ENCODE measurements at regions of chr7 and their contacts with region 1.

Region 1: DNA sequence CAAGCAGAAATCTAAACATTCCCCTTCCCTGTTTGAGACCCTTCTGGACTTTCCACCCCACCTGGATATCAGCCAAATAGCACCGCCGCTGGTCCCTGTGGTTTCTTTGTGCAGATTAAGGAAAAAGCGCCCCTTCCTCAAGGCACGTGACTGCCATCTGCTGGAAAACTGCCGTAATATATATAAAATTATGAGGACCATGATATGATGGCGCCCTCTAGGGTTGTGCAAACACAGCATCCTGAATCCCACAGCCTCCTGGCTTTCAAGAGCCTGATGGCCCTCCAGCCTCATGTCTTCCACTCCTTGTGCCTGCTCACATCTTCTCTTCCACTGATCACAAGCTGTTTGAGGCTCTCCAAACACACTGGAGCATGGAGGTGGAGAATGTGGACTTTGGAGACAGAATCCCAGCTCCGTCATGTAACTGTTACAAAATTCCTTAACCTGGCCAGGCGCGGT is 121.3 kb downstream of the MYL10 start:
- DNase-seq: peak in 1 of 2 experiments; percentile 81
- H3K4me3 ChIP-seq: no peak overlapping the region
- H3K27ac ChIP-seq: no peak overlapping the region
- H3K4me1 ChIP-seq: peaks cover 2 to 15% (median 7%) of the 10 kb centered on the region in 4 experiments
- H3K27me3 ChIP-seq: no peaks in the 10 kb centered on the region
- CTCF ChIP-seq: peak; percentile 72 to 100 (median 93)
- EP300 ChIP-seq: no peak
- POLR2A ChIP-seq: no peak
- RAD21 ChIP-seq: peak; percentile 94 to 96

Region 2: GRCh38 chr7:101410743-101411507 is 96.9 kb before region 1 on chr7:
- CTCF ChIA-PET with region 1: interaction called, 13 read pairs
- POLR2A ChIA-PET with region 1: interaction called, 3 read pairs
- DNase-seq: peak; percentile 83 to 95
- H3K4me3 ChIP-seq: no peak overlapping the region
- H3K27ac ChIP-seq: no peak overlapping the region
- H3K4me1 ChIP-seq: peaks cover 4 to 9% (median 6%) of the 10 kb centered on the region in 4 experiments
- H3K27me3 ChIP-seq: no peaks in the 10 kb centered on the region
- CTCF ChIP-seq: peak; percentile 88 to 99 (median 99)
- EP300 ChIP-seq: no peak
- POLR2A ChIP-seq: no peak
- RAD21 ChIP-seq: peak; percentile 78 to 89

Region 3: GRCh38 chr7:101470668-101471487 is 36.9 kb before region 1 on chr7:
- CTCF ChIA-PET with region 1: interaction called, 17 read pairs
- POLR2A ChIA-PET with region 1: no interaction called
- DNase-seq: no peak
- H3K4me3 ChIP-seq: no peak overlapping the region
- H3K27ac ChIP-seq: no peak overlapping the region
- H3K4me1 ChIP-seq: peaks cover 0 to 11% (median 4%) of the 10 kb centered on the region in 4 experiments; a peak in 4 of 7 replicates
- H3K27me3 ChIP-seq: no peaks in the 10 kb centered on the region
- CTCF ChIP-seq: no peak
- EP300 ChIP-seq: no peak
- POLR2A ChIP-seq: no peak
- RAD21 ChIP-seq: no peak

Region 4: DNA sequence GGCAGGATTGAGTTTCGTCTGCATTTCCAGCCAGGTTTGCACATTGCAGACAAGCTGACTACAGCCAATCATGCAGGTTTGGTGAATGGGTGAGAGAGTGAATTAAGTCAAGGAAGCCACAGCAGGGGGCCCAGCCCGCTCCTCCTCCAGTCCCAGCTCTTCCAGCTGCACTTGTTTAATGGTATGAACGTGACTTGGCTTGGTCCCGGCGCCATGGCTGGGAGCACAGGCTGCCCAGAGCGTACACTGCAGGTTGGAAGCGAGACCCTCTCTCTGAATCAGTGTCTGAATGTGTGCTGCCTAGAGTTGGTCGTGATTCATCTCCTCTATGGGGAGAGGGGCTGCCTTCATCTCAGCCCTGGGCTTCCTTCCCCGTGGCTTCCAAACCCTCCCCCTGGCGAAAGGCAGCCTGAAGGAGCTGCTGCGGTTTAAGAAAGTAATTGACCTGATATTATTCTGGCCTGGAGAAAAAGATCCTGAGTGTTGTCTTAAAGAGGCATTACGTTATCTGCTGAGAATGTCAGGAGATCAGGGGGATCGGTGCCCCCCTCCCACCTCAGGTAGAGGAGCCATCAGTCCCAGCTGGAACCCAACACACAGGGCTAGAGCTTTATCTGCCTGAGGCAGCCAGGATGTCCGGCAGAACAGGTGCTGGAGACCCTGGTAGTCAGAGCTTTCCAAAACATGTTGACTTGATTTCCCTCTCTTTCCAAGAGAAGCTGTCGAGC is 13.1 kb before region 1 on chr7:
- CTCF ChIA-PET with region 1: interaction called, 22 read pairs
- POLR2A ChIA-PET with region 1: interaction called, 4 read pairs
- DNase-seq: no peak
- H3K4me3 ChIP-seq: no peak overlapping the region; a peak in 1 of 8 replicates
- H3K27ac ChIP-seq: no peak overlapping the region
- H3K4me1 ChIP-seq: peaks cover 4 to 16% (median 8%) of the 10 kb centered on the region in 4 experiments
- H3K27me3 ChIP-seq: no peaks in the 10 kb centered on the region
- CTCF ChIP-seq: no peak
- EP300 ChIP-seq: no peak
- POLR2A ChIP-seq: no peak
- RAD21 ChIP-seq: no peak

Region 5: DNA sequence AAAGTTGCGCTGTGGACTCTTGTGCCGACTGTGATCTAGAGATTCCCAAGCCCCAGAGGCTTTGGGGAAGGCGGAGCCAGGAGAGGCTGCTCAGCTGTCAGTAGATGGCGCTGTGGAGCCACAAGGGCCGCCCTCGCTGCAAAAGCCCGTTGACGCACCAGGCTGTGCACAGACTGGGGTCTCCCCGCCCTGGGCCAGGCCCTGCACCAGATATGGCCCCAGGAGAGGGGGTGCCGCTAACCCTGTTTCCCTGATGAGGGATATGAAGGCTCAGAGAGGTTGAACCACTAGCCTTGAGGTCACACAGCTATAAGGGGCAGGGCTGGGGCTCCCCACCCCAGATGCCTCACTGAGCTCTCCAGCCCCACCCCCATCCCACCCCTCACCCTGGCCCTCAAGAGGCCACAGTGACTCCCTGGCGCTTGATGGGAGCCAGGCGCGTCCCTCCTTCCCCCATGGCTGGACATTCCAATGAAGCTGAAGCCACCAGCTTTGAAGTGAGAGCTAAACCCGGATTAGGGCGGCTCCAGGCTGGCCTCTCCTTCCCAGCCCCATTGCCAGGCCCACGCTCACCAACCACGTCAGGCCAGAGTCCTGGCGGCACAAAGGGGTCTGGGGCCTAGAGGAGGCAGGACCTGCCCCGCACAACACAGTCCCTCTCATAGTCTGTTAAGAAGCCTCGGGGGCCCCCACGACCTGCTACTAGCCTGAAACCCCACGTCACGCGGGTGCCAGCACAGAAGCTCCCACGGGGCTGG is 94.8 kb after region 1 on chr7:
- CTCF ChIA-PET with region 1: no interaction called
- POLR2A ChIA-PET with region 1: no interaction called
- DNase-seq: peak; percentile 77 to 97
- H3K4me3 ChIP-seq: no peak overlapping the region
- H3K27ac ChIP-seq: no peak overlapping the region
- H3K4me1 ChIP-seq: peaks cover 0 to 6% (median 6%) of the 10 kb centered on the region in 4 experiments; a peak in 5 of 7 replicates
- H3K27me3 ChIP-seq: no peaks in the 10 kb centered on the region
- CTCF ChIP-seq: peak; percentile 89 to 97 (median 91)
- EP300 ChIP-seq: peak in 1 of 2 experiments; percentile 23; a peak in 1 of 3 replicates
- POLR2A ChIP-seq: no peak
- RAD21 ChIP-seq: peak; percentile 97

Region 6: DNA sequence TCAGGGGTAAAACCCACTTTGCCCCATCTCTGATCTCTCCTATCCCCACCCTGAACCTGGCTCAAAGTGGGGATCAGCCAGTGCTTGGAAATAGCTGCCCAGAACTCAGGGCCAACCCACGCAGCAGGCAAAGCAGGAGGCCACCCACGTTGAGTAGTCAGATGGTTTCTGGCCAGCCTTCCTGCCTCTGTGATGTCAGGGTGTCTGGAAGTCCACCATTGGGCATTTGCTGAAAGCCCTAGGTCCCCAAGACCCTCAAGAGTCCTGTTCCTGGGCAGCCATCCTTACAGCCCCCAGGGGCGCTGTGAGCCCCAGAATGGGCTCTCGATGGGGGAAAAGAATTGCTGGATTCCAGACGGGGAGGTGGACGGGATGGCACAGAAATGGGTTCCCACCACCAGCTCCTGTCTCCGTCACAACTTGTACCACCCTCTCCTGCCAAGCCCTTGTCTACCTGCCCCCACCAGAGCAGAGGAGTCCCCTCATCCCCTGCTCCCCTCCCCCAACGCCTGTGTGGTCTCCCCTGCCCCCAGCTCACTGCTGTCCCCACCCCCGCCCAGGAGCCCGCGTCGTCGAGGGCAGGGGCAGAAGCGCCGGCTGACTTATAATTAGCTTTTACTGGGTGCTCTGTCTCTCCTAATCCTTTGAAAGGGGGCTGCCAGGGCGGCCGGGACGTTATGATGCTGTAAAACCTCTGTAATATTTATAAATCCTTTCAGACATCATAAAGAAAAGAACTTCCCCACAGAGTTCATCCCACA is 117.4 kb after region 1 on chr7:
- CTCF ChIA-PET with region 1: no interaction called
- POLR2A ChIA-PET with region 1: no interaction called
- DNase-seq: no peak
- H3K4me3 ChIP-seq: no peak overlapping the region
- H3K27ac ChIP-seq: no peak overlapping the region
- H3K4me1 ChIP-seq: peaks cover 0 to 26% (median 17%) of the 10 kb centered on the region in 4 experiments; a peak in 6 of 7 replicates
- H3K27me3 ChIP-seq: no peaks in the 10 kb centered on the region
- CTCF ChIP-seq: peak in 2 of 3 experiments; percentile 26 to 54; a peak in 2 of 4 replicates
- EP300 ChIP-seq: no peak
- POLR2A ChIP-seq: no peak
- RAD21 ChIP-seq: peak; percentile 37 to 53; a peak in 3 of 4 replicates

Measured in H1 (cell line).